Activated naive CD4-positive, alpha-beta T cell treated with anti-CD3 and anti-CD28 coated beads for 36 hours (primary cell): ENCODE measurements at regions of chr9 and their contacts with region 1.

Region 1: DNA sequence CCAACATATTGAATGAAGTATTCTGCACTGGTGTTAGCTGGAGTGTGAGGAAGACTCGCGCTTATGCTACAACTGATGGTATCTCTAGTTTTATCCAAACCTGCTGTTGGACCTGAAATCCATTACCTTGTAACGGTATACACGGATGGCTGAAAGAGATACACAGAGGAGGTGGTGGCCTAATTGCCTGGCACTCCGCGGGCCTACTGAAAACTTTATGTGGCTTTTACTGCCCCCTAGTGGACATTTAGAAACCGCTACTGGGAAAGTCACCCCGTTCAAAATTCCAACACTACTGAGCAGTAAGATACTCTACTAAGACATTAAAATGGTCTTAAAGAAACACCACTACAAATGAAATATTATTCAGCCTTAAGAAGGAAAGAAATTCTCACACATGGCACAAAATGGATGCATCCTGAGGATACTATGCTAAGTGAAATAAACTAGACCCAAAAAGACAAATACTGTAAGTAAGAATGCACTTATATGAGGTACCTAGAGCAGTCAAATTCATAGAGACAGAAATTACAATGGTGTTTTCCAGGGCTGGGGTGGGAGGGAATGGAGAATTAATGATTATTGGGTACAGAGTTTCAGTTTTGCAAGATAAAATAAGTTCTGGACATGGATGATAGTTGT is 100.4 kb downstream of the TTLL11 start:
- DNase-seq: peak; percentile 53
- H3K4me3 Mint-ChIP-seq: no peak overlapping the region
- H3K27ac Mint-ChIP-seq: no peak overlapping the region
- H3K4me1 Mint-ChIP-seq: no peaks in the 10 kb centered on the region
- H3K27me3 Mint-ChIP-seq: no peaks in the 10 kb centered on the region

Region 2: DNA sequence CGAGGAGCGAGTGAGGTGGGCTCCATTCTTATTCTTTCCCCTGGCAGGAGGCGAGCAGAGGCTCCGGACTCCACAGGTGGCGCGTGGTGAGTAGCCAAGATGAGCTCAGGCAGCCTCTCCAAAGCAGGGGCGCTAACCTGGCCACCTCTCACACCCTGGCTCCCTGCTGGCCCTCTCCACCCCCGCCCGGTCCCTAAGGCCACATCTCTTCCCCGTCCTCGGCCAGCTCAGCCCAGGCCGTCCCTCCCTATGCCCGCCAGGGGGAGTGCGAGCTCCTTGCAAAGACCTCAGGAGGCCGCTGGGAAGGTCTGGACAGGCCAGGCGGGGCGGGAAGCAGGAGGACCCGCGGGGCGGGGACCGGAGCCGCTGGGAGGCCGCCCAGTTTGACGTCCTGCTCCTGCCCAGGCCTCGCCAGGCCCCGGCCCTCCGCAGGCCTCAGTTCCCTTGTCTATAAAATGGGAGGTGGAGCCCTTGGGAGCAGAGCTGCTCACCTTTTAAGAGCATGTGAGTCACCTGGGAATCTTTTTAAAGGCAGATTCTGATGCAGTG is 446.7 kb before region 1 on chr9:
- CTCF ChIA-PET with region 1: no interaction called
- intact Hi-C with region 1: loop called (anchors 1 kb)
- DNase-seq: peak; percentile 80
- H3K4me3 Mint-ChIP-seq: no peak overlapping the region
- H3K27ac Mint-ChIP-seq: no peak overlapping the region
- H3K4me1 Mint-ChIP-seq: peaks cover under 1% of the 10 kb centered on the region
- H3K27me3 Mint-ChIP-seq: peaks cover 27% of the 10 kb centered on the region

Region 3: DNA sequence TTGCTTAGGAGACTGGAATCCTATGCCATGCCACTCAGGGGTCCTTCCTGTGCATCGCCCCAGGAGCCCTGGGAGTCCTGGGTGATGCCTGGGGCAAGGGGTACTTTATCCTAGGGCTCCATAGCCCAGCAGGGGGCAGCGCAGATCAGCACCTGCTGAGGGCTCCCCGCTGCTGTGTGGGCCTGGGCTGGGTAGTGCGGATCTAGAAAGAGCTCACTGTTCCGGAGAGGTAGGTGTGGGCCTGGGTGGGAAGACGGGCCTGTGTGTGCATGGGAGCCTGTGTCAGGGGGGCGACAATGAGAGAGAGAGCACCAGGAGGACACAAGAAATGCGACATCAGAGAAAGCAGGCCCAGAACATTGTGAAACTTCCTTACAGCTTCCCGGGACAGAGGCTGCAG is 352.6 kb before region 1 on chr9:
- CTCF ChIA-PET with region 1: no interaction called
- intact Hi-C with region 1: loop called (anchors 5 kb)
- DNase-seq: peak; percentile 53
- H3K4me3 Mint-ChIP-seq: no peak overlapping the region
- H3K27ac Mint-ChIP-seq: no peak overlapping the region
- H3K4me1 Mint-ChIP-seq: no peaks in the 10 kb centered on the region
- H3K27me3 Mint-ChIP-seq: no peaks in the 10 kb centered on the region

Region 4: GRCh38 chr9:121686930-121687541 is 305.7 kb before region 1 on chr9:
- CTCF ChIA-PET with region 1: interaction called, 8 read pairs
- intact Hi-C with region 1: loop called (anchors 1 kb)
- DNase-seq: peak; percentile 82
- H3K4me3 Mint-ChIP-seq: no peak overlapping the region
- H3K27ac Mint-ChIP-seq: no peak overlapping the region
- H3K4me1 Mint-ChIP-seq: no peaks in the 10 kb centered on the region
- H3K27me3 Mint-ChIP-seq: no peaks in the 10 kb centered on the region

Region 5: DNA sequence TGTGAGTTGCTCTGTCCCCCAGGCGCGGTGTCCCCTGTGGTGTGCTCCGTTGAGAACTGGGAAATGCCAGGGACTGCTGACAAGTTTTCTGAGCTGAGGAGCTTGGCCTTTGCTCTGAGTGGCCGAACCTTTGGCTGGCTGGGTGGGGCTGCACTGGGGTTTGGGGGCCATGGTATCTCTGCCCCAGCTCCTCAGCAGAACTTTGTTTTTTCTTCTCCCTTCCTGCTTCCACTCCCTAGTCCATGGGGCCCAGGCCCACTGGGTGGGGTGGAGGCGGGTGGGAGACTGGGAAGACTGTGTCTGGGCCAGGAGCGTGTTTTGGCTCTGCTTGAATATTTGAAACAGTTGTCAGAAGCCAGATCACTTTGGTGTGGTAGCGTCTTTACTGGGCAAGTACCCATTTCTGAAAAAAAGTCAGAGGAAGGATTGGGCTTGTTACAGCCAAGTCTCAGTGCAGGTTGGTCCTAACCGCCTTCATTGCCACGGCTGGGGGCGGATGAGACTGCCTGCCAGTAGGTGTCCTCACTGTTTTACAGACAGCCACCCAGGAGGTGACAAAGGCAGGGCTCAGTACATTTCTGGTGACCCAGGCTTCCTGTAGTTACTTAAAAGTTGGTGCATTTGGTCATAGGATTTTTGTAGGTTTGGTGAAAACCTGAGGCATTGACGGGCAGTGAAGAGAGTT is 248.5 kb before region 1 on chr9:
- CTCF ChIA-PET with region 1: no interaction called
- intact Hi-C with region 1: loop called (anchors 1 kb)
- DNase-seq: peak; percentile 67
- H3K4me3 Mint-ChIP-seq: no peak overlapping the region
- H3K27ac Mint-ChIP-seq: no peak overlapping the region
- H3K4me1 Mint-ChIP-seq: peaks cover 12% of the 10 kb centered on the region
- H3K27me3 Mint-ChIP-seq: no peaks in the 10 kb centered on the region

Region 6: GRCh38 chr9:121825031-121825691 is 167.5 kb before region 1 on chr9:
- CTCF ChIA-PET with region 1: no interaction called
- intact Hi-C with region 1: no loop called
- DNase-seq: no peak
- H3K4me3 Mint-ChIP-seq: no peak overlapping the region
- H3K27ac Mint-ChIP-seq: no peak overlapping the region
- H3K4me1 Mint-ChIP-seq: no peaks in the 10 kb centered on the region
- H3K27me3 Mint-ChIP-seq: no peaks in the 10 kb centered on the region

Region 7: DNA sequence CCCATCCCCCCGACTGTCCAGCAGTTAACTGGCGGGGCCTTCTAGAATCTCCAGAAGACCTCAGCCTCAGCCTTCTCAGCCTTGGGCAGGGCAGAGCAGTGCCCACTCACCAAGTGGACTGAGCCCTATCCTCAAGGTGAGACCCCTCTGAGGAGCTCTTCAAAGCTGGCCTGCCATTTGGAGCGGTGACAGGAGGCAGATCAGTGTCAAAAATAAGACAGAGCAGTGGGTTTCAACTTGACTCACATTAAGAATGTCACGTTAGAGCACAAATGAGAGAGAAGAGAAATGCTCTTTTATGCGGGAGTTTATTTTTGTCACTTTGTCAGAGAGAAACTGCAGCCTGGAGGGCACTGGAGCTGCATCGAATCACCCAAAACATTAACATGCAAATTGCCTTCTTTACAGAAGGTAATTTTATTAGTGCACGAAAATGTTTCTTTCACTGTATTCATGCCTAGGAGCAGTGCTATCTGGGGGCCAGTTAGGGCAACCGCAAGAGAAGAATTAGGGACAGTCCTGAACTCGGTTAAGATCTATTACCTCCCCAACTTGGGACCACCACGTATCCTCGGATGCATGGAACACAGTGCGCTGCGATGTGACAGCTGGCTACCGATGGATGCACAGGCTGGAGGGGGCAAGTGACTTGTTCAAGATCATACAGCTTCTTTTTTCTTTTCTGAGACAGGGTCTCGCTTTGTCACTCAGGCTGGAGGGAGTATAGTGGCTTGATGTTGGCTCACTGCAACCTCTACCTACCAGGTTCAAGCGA is 152.8 kb before region 1 on chr9:
- CTCF ChIA-PET with region 1: no interaction called
- intact Hi-C with region 1: loop called (anchors 10 kb)
- DNase-seq: peak; percentile 47
- H3K4me3 Mint-ChIP-seq: no peak overlapping the region
- H3K27ac Mint-ChIP-seq: no peak overlapping the region
- H3K4me1 Mint-ChIP-seq: peaks cover 14% of the 10 kb centered on the region
- H3K27me3 Mint-ChIP-seq: peaks cover 3% of the 10 kb centered on the region